ENCODE measurements at regions of chr11 and their contacts with region 1.

Region 1: DNA sequence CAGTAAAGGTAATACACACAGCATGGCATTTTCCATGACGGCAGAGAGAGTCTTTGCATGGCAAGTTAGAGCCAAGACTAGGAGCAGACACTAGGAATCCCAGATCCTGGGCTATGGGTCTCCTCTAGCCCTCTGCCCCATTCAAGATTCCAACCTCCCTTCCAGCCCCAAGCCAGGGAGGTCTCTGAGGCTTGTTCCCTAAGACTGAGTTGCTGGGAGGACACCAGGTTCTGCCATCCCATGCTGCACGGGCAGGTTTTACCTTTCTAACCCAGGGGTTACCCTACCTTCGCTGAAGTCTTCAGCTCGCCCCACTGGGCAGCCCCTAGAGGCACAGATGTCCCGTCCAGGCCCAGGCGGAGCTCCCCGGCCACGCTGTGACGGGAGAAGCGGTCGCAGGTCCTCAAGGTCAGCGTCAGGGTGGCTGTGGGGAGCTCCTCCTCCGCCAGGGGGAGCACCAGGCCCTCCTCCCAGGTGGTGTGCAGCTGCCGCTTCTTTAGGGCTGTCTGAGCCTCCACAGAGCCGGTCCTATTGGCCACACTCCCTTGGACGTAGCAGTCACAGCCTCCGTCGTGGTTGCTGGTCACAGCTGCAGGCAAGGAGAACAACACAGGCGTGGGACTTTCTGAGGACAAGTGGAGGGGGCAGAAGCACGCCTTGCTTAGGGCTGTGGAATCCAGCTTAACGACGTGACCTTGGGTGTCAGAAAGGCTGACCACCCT is 33.8 kb downstream of the SYT13 start:
- H3K4me3 ChIP-seq: no peak overlapping the region
- H3K27ac ChIP-seq: no peak overlapping the region
- H3K4me1 ChIP-seq: no peaks in the 10 kb centered on the region
- CTCF ChIP-seq: 0 out of 2 replicates have a peak, but pooled peaks have one; percentile 21

Region 2: DNA sequence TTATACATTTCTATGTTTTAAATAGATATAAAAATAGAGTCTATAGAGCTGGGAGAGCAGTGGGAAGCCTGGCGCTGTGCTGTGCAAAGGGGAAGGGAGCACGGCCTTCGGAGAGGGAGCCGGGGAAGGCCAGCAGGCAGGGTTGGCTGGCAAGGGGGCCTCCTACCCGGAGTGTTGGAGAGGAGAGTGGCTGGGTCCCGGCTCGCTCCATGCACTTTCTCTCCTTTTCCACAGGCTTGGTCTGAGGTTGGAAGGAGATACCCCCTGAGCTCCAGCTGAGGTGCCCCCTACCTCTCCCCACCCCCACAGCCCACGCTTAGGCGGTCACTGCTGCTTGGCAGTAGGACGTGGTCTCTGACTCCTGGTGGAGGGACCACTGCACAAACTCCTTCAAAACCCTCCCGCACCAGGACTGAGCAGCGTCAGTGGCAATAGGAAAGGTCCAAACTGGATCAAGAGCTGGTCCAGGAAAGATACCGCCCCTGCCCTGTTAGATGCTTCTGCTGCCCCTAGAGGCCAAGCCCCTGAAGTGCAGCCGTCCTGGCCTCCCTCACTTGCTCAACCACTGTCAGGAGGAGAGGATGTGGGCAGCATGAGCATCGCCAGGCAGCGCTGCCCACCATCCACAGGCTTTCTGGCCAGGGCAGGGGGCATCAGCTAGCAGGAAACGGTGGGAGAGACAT is 19.0 kb before region 1 on chr11:
- CTCF ChIA-PET with region 1: interaction called, 12 read pairs
- POLR2A ChIA-PET with region 1: no interaction called
- H3K4me3 ChIP-seq: no peak overlapping the region
- H3K27ac ChIP-seq: no peak overlapping the region
- H3K4me1 ChIP-seq: no peaks in the 10 kb centered on the region
- CTCF ChIP-seq: peak; percentile 41; the same call in 1 of the 2 replicates

Region 3: GRCh38 chr11:45267052-45267451 is 14.8 kb after region 1 on chr11:
- CTCF ChIA-PET with region 1: interaction called, 11 read pairs
- POLR2A ChIA-PET with region 1: no interaction called
- H3K4me3 ChIP-seq: no peak overlapping the region
- H3K27ac ChIP-seq: no peak overlapping the region
- H3K4me1 ChIP-seq: no peaks in the 10 kb centered on the region
- CTCF ChIP-seq: no peak; the same call in 1 of the 2 replicates

Region 4: DNA sequence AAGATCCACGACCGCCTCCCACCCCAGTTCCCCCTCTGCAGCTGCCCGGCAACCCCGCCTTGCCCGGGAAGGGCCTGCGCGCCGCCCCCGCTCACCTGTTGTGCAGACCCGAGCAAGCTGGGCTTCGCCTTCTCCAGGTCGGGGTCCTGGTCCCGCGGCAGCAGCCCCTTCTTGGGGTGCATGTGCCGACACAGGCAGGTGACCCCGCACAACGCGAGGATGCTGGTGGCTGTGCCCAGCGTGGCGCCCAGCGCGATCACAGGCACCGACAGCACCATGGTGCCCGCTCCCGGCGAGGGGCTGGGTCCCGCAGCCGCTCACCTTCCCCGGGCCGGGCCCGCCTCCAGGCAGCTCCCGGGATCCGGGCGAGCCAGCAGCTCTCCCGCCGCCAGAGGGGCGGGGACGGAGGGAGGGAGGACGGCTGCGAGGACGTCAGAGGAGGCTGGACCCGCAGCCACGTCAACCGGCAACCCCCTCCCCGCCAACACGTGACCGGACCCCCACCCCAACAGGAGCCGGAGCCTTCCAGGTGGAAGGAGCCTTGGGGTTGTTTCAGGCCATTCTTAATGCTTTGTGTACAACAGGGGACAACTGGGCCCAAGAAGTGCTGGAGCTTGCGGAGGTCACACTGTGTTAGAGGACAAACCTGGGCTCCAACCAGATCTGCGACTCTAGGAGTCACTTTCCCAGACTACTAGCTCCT is 33.8 kb after region 1 on chr11 and contains the start of gene SYT13:
- CTCF ChIA-PET with region 1: interaction called, 11 read pairs
- POLR2A ChIA-PET with region 1: no interaction called
- H3K4me3 ChIP-seq: no peak within 1 kb of the TSS
- H3K27ac ChIP-seq: no peak within 1 kb of the TSS
- H3K4me1 ChIP-seq: no peaks in the 10 kb centered on the region
- CTCF ChIP-seq: no peak

Region 5: DNA sequence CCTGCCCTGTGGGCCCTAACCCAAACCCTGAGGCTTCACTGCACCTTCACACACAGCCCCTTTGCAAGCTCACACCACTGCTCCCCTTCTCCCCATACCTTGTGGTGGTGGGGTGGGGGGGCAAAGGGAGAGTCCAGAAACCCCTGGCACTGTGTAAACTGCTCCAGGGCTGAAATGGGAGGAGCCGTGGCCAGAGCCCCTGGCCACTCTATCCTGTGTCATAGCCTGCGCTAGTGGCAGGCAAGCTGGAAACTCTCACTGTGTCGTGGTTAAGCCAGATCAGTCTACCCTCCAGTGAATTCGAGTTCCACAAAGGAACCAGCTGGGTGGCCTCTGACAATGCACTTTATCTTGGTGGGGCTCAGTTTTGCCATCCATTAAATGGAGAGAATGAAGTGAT is 42.2 kb after region 1 on chr11:
- CTCF ChIA-PET with region 1: interaction called, 10 read pairs
- POLR2A ChIA-PET with region 1: no interaction called
- H3K4me3 ChIP-seq: no peak overlapping the region
- H3K27ac ChIP-seq: no peak overlapping the region
- H3K4me1 ChIP-seq: no peaks in the 10 kb centered on the region
- CTCF ChIP-seq: no peak